Activated T-helper 1 cell treated with anti-CD3 and anti-CD28 coated beads, Interleukin-12 subunit alpha, Interleukin-12 subunit beta, Interleukin-2, Interleukin-4 antibody, amounts not matched to agents 30 ng/mL and 10 ng/mL and 1 ng/mL, durations not matched to agents 14 hours and 24 hours and 36 hours (primary cell): ENCODE measurements at regions of chr4 and their contacts with region 1.

Region 1: GRCh38 chr4:80266253-80266901 is at the start of gene FGF5:
- DNase-seq: no peak
- H3K4me3 Mint-ChIP-seq: peak within 1 kb of the TSS; percentile 67
- H3K27ac Mint-ChIP-seq: peak within 1 kb of the TSS; percentile 50
- H3K4me1 Mint-ChIP-seq: peaks cover 13% of the 10 kb centered on the region
- H3K27me3 Mint-ChIP-seq: peaks cover 85% of the 10 kb centered on the region
- total RNA-seq, gene FGF5: 0.05 TPM in 1 of 2 replicates, not detected in the other

Region 2: DNA sequence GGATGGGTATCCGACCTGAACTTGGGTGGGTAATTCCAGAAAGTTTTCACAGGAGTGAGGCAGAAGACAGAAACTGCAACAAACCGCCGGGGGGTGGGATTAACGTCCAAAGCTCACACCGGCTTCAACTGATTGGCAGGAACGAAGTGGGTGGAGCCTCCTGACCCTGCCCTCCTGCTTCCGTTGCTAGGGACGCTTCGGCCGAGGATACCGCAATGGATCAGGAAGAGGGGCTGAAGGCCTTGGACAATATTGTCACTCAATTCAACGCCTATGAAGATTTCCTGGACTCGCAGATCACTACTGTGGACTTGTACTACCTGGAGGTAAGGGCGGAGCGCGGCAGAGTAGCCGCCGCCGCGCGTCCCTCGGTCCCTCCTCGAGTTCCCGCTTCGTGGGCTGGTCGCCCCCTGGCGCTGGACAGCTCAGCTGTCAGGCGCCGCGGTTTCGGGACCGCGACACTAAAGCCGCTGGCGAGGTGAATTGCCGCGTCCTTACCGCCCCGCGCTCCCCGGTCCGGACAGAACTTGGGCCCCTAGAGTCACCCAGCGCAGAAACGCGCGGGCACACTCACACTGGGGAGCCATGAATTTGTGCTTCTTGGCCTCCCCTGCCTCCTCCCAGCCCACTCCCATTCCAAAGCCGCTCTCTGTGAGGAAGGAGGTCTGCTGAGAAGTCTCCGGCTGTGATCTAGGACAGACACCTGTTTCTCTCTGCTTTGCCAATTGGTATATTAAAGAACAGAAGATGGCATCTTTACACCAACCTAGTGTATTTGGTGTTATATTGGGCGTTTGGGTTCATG is 69.4 kb after region 1 on chr4 and contains the start of gene CFAP299:
- intact Hi-C with region 1: loop called (anchors 5 kb)
- DNase-seq: peak; percentile 25
- H3K4me3 Mint-ChIP-seq: peak within 1 kb of the TSS; percentile 58
- H3K27ac Mint-ChIP-seq: no peak within 1 kb of the TSS
- H3K4me1 Mint-ChIP-seq: peaks cover 7% of the 10 kb centered on the region
- H3K27me3 Mint-ChIP-seq: peaks cover 24% of the 10 kb centered on the region
- total RNA-seq, gene CFAP299: not detected in 2 replicates